Sciatic nerve (tissue), 2 donors: ENCODE measurements at regions of chr6 and their contacts with region 1.

Region 1: GRCh38 chr6:8947900-8948299 is 512.6 kb upstream of the SLC35B3 start:
- DNase-seq: no peak
- ATAC-seq: no peak

Region 2: DNA sequence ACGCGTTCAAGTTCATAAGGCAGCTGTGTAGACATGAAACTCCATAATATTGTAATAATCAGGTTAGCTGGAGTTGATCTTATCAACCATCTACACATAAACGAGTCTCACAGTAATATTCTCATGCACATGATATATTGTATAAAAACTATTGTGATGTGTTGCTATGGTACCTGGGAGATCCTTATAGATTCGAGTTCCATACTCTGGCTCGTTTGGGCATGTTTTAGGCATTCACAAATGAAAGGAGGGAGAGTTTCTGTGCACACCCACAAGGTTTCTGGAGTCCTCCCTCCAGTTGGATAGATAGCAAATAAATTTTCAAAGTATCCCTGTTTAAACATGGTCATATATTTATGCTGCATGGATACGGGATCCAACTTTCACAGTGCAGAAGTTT is 54.9 kb after region 1 on chr6:
- intact Hi-C with region 1: no loop called
- DNase-seq: no peak
- ATAC-seq: no peak

Region 3: GRCh38 chr6:10230559-10230958 is 1282.7 kb after region 1 on chr6:
- intact Hi-C with region 1: loop called (anchors 5 kb)
- DNase-seq: no peak
- ATAC-seq: no peak